ENCODE measurements at regions of chr7 and their contacts with region 1.

Region 1: GRCh38 chr7:143284591-143285453 is at the start of gene TMEM139:
- DNase-seq: no peak
- ATAC-seq: peak; percentile 51
- H3K4me3 ChIP-seq: peak within 1 kb of the TSS; percentile 40 to 53
- H3K27ac ChIP-seq: peak within 1 kb of the TSS; percentile 51
- H3K4me1 ChIP-seq: peaks cover 26 to 62% of the 10 kb centered on the region in 2 experiments
- H3K27me3 ChIP-seq: no peaks in the 10 kb centered on the region
- CTCF ChIP-seq: no peak
- POLR2A ChIP-seq: no peak
- RAD21 ChIP-seq: no peak
- total RNA-seq, gene TMEM139: 9.9 TPM

Region 2: GRCh38 chr7:143263266-143264195 is 21.3 kb before region 1 on chr7 and contains the start of gene GSTK1:
- CTCF ChIA-PET with region 1: no interaction called
- POLR2A ChIA-PET with region 1: interaction called, 4 read pairs
- RAD21 ChIA-PET with region 1: no interaction called
- intact Hi-C with region 1: loop called (anchors 2 kb)
- DNase-seq: peak; percentile 32
- ATAC-seq: peak; percentile 98
- H3K4me3 ChIP-seq: peak within 1 kb of the TSS; percentile 89 to 91
- H3K27ac ChIP-seq: peak within 1 kb of the TSS; percentile 46
- H3K4me1 ChIP-seq: peaks cover 9 to 26% of the 10 kb centered on the region in 2 experiments; a peak in 3 of 4 replicates
- H3K27me3 ChIP-seq: no peaks in the 10 kb centered on the region
- CTCF ChIP-seq: no peak
- POLR2A ChIP-seq: peak; percentile 97
- RAD21 ChIP-seq: no peak
- total RNA-seq, gene GSTK1: 83.6 TPM